Ovary (tissue), 10 donors: ENCODE measurements at regions of chr1 and their contacts with region 1.

Region 1: GRCh38 chr1:4006676-4007374 is 106.8 kb upstream of the C1orf174 start:
- DNase-seq: no peak
- H3K4me3 ChIP-seq: no peak overlapping the region
- H3K27ac ChIP-seq: no peak overlapping the region
- H3K4me1 ChIP-seq: no peaks in the 10 kb centered on the region
- H3K27me3 ChIP-seq: no peaks in the 10 kb centered on the region
- CTCF ChIP-seq: no peak
- EP300 ChIP-seq: no peak
- POLR2A ChIP-seq: no peak

Region 2: DNA sequence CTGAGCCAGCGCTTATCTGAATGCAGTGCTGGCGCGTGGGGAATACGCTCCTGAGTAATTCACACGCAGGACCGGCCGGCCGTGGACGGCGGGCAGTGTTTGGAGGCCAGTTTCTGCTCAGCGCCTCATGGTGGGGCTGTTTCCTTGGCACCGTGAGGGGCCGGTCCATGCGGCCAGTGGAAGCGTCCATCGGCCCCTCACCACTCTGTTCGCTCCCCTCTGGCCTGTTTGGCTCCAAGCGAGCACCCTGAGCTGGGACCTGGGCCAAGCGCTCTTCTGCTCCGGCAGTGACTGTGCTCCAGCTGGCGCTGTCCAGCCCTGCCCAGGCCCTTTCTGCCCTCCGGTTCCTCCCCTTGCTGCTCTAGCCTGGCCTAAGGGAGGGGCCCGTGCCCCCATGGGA is 1547.1 kb before region 1 on chr1:
- intact Hi-C with region 1: loop called in 1 of 4 experiments (anchors 10 kb)
- DNase-seq: peak in 4 of 5 donors; percentile 22 to 48 (median 38)
- H3K4me3 ChIP-seq: no peak overlapping the region
- H3K27ac ChIP-seq: no peak overlapping the region
- H3K4me1 ChIP-seq: no peaks in the 10 kb centered on the region
- H3K27me3 ChIP-seq: no peaks in the 10 kb centered on the region
- CTCF ChIP-seq: no peak
- EP300 ChIP-seq: no peak
- POLR2A ChIP-seq: no peak

Region 3: GRCh38 chr1:3900119-3900968 is 106.5 kb before region 1 on chr1 and contains the start of gene C1orf174:
- intact Hi-C with region 1: no loop called
- DNase-seq: peak; percentile 95 to 98 (median 96)
- H3K4me3 ChIP-seq: peak within 1 kb of the TSS; percentile 100
- H3K27ac ChIP-seq: peak within 1 kb of the TSS; percentile 58 to 95
- H3K4me1 ChIP-seq: peaks cover 4% of the 10 kb centered on the region
- H3K27me3 ChIP-seq: no peaks in the 10 kb centered on the region
- CTCF ChIP-seq: no peak
- EP300 ChIP-seq: peak; percentile 54
- POLR2A ChIP-seq: no peak
- total RNA-seq, gene C1orf174: 12.9 to 23.9 (median 19.5) TPM

Region 4: GRCh38 chr1:3968851-3969250 is 38.0 kb before region 1 on chr1:
- intact Hi-C with region 1: no loop called
- DNase-seq: no peak
- H3K4me3 ChIP-seq: no peak overlapping the region
- H3K27ac ChIP-seq: no peak overlapping the region
- H3K4me1 ChIP-seq: no peaks in the 10 kb centered on the region
- H3K27me3 ChIP-seq: no peaks in the 10 kb centered on the region
- CTCF ChIP-seq: no peak
- EP300 ChIP-seq: no peak
- POLR2A ChIP-seq: no peak

Region 5: GRCh38 chr1:4172644-4173599 is 166.1 kb after region 1 on chr1:
- intact Hi-C with region 1: no loop called
- DNase-seq: peak in 1 of 5 donors; percentile 2
- H3K4me3 ChIP-seq: no peak overlapping the region
- H3K27ac ChIP-seq: no peak overlapping the region
- H3K4me1 ChIP-seq: no peaks in the 10 kb centered on the region
- H3K27me3 ChIP-seq: no peaks in the 10 kb centered on the region
- CTCF ChIP-seq: no peak
- EP300 ChIP-seq: no peak
- POLR2A ChIP-seq: no peak